Dorsolateral prefrontal cortex (tissue), 120 donors: ENCODE measurements at regions of chr17 and their contacts with region 1.

Region 1: DNA sequence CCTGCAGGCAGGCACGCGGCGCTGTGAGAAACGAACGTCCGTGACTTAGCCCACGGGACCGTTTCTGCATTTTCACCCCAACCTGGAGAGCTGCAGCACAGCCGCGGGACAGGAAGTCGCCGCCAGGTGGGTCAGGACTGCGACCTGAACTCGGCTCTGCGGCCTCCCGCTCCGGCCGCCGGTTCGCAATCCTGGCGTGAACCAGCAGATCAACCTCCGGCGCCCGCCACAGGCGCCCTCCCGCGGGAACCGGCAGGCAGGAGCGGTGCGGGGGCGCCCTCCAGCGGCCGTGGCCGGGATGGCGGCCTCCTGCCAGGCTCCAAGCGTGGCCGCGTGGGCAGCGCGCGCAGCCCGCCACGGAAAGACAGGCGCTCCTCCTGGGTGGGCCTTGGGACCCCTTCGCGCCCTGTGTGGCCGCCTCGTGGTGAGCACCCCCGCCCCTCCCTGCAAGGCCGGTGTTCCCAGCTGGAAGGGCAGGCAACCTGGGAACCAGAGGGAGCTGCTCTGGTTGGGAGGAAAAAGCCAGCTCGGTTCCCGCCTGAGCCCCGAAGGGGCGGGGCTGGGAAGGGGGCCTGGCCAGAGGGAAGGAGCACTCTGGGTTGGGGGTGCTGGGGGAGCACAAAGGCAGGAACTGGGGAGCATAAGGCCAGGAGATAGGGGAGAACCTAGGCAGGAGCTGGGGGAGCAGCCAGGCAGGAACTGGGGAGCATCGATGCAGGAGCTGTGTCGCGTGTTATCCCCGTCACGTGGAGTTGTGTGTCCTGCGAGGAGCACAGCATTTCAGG is 28.2 kb downstream of the ACTG1 start:
- DNase-seq: peak; percentile 71 to 93 (median 88)
- H3K4me3 ChIP-seq: peak overlapping the region; percentile 36 to 71 (median 61)
- H3K27ac ChIP-seq: peak overlapping the region in 33 of 59 donors; percentile 1 to 85 (median 51)
- H3K27me3 ChIP-seq: no peaks in the 10 kb centered on the region
- CTCF ChIP-seq: peak in 55 of 56 donors; percentile 81 to 100 (median 99)

Region 2: DNA sequence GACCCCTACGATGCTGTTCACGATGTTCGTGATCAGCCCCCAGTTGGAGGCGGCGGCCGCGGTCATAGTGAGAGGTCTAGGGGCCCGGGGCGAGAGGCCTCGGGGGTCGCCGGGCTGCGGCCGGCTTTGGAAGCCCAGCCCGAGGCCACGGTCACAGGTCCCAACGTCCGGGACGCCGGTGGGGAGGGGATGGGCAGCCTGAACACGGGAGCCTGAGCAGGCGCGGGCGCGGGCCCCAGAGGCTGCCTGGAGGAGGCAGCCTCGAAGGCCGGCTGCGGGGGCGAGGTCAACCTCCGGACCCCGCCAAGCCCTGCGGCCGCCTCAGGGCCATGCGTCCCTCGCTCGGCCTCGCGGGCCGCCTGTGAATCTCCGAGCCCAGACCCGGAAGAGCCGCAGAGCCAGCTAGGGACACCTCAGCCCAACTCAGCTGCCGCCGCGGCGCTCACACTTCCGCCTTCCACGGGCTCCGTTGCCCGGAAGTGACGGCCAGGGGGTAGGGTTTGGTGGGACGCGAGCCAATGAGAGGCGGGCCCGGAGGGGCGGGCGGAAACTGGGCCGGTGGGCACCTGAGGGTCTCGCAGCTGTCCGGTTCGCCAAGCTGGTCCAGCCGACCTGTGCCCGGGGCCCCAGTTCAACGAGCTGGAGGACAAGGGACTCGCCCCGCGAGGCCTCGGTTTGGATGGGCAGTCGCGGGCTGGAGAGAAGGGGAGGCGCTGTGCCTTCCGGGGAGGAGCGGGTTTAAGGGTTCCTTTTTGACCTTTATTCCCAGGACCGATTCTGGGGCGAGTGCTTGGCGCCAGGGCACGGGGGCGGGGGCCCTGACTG is 189.3 kb before region 1 on chr17 and contains the start of gene SLC38A10:
- intact Hi-C with region 1: loop called (anchors 5 kb)
- DNase-seq: peak; percentile 83 to 95 (median 90)
- H3K4me3 ChIP-seq: peak within 1 kb of the TSS; percentile 62 to 98 (median 88)
- H3K27ac ChIP-seq: peak within 1 kb of the TSS; percentile 63 to 98 (median 91)
- H3K27me3 ChIP-seq: no peaks in the 10 kb centered on the region
- CTCF ChIP-seq: peak in 47 of 56 donors; percentile 8 to 68 (median 46)
- total RNA-seq, gene SLC38A10: 30.0 to 80.0 (median 48.8) TPM

Region 3: GRCh38 chr17:81401723-81402529 is 82.5 kb before region 1 on chr17:
- intact Hi-C with region 1: loop called in 1 of 2 experiments (anchors 5 kb)
- DNase-seq: peak in 2 of 10 donors; percentile 57 to 68
- H3K4me3 ChIP-seq: peak overlapping the region in 49 of 59 donors; percentile 1 to 91 (median 76)
- H3K27ac ChIP-seq: peak overlapping the region; percentile 47 to 100 (median 97)
- H3K27me3 ChIP-seq: no peaks in the 10 kb centered on the region
- CTCF ChIP-seq: peak in 52 of 56 donors; percentile 0 to 65 (median 45)

Region 4: GRCh38 chr17:81512560-81513371 is 28.4 kb after region 1 on chr17 and contains the start of gene ACTG1:
- intact Hi-C with region 1: loop called in 1 of 2 experiments (anchors 2 kb)
- DNase-seq: peak; percentile 83 to 94 (median 92)
- H3K4me3 ChIP-seq: peak within 1 kb of the TSS; percentile 77 to 100 (median 94)
- H3K27ac ChIP-seq: peak within 1 kb of the TSS; percentile 88 to 100 (median 99)
- H3K27me3 ChIP-seq: peaks cover 0 to under 1% (median 0%) of the 10 kb centered on the region in 45 donors
- CTCF ChIP-seq: peak in 2 of 56 donors; percentile 11 to 17
- total RNA-seq, gene ACTG1: 558 to 1,589 (median 1,117) TPM